Right ventricle myocardium superior (tissue), 1 donor: ENCODE measurements at regions of chr7 and their contacts with region 1.

Region 1: DNA sequence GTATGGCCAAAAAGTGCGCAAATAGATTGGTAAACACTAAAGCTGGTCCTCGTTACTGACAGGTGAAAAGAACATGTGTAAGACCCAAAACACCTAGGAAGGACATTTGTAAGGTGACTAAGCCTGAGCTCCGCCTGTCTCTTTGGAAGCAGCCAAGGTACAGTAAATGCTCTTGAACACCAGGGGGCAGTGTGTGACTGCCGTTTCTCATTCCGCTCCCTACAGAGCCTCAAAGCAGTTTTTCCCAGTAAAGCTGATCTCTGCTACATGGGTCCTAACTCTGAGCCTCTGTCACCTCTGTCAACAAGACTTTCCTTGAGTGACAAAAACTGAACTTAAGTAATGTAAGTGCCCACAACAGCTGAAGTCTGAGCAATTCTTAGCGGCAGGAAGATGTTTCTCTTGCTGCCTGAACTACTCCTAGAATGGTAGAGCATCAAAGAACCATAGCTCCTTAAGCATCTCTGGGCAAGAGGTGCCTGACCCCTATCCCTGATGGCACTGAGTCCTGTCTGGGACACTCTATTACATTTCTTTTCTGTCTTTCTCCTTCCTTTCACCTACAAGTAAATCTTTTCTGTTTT is 238.0 kb upstream of the INHBA start:
- DNase-seq: peak; percentile 57
- ATAC-seq: peak; percentile 89

Region 2: DNA sequence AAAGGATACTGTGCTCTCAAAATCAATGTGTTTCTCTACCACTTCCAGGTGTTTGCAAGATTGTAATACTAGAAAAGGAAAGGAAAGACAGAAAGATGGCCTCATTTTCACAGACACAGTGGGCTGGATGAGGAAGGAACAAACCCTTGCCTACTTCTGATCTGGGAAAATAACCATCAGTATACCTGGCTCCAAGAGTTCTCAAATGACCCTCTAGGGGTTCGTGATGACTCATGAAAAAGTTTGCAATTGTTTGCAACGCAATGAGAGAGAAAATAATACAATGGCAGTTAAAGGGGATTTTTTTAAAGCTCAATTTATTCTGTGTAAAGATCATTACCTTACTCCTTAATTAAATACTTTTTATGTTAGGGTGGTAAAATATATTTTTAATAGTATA is 40.3 kb before region 1 on chr7:
- intact Hi-C with region 1: no loop called
- DNase-seq: no peak
- ATAC-seq: no peak

Region 3: GRCh38 chr7:41977151-41977651 is 36.3 kb after region 1 on chr7:
- intact Hi-C with region 1: loop called (anchors 5 kb)
- DNase-seq: no peak
- ATAC-seq: peak; percentile 80

Region 4: DNA sequence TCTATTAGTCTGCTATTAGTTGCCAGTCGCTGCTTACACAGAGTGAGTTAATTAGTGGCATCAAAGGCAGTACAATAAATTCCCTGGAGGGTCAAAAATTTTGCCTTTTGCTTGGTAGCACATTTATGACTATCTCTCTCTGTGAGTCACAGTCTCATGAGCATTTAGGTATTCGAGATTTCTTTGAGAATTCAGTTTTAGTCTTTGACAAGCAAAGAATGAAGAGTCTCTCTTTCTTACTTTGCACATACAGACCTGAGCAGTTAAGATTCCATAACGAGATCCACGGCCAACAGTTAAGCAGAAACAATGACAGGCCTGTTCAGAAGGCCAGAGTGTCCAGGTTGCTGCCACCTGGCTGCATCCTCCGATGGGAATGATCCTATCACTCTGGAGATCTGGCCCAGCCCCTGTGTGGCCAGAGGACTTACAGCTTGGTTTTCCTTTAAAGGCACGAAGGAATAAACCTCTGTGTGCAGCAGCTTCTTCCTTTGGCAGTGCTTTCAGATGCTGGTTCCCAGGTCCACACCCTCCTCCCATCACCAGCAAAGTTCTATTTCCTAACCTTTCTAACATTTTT is 215.5 kb after region 1 on chr7:
- intact Hi-C with region 1: no loop called
- DNase-seq: no peak
- ATAC-seq: no peak

Region 5: DNA sequence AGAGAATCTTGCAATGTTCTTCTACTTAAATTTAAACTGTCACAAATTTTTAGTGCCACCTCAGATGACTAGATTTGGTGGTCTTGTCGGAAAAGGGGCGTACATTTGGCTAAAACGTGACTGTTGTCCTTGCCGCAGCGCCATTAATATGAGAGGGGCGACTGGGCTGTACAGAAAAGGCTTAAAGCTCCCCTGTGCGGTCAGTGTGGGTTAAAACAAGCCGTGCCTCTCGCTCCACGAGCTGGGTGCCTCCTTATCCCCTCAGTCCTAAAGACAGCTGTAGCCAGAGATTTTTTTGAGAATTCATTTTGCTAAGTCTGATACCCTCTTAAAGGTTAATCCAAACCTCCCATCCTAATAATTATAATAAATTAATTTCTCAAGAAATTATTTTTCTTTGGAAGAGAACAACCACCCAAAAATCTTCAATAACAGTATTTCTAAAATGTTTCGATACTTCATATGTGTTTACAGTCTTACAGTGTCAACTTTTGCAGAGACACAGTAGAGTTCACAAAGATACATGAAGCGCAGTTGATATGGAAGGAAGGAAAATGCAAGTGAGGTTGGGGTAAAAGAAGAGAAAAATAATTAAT is 902.5 kb after region 1 on chr7:
- intact Hi-C with region 1: loop called (anchors 5 kb)
- DNase-seq: peak; percentile 51
- ATAC-seq: peak; percentile 85